Endothelial cell of umbilical vein (primary cell): ENCODE measurements at regions of chr5 and their contacts with region 1.

Region 1: DNA sequence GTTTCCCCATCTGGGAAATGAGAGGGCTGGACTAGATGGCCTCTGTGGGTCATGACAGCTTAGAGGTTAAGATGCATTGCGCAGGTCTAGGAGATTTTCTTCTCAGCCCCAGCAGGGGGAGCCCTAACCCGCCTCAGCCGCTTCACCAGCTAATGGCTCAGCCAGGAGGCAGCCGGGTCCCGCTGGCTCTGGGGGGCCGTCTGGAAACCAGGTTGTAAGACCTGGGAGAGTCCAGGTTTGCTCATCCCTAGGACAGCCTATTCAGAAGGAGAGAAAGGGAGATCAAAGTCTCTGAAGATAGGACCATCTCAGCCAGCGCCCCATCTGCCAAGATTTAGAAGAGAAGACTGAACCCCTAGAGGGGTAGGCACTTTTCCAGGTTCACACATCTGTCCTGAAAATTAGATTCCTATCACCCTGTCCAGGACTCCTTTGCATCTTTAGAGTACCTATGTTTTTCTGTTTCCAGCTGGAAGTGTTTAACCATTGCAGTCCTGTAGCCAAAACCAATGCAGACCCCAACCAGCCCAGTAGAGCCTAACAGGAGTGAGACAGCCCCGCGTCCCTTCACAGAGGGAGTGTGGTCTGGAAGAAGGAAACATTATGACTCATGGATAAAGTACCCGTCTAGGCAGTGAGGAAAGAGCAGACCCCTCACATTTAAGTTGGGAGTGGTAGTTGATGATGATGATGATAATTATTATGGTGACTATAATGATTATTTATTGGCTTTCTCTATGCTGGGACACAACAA is 27.5 kb downstream of the SPARC start:
- DNase-seq: peak; percentile 84
- H3K4me3 ChIP-seq: no peak overlapping the region
- H3K27ac ChIP-seq: no peak overlapping the region
- H3K4me1 ChIP-seq: peaks cover 16% of the 10 kb centered on the region
- H3K27me3 ChIP-seq: no peaks in the 10 kb centered on the region
- CTCF ChIP-seq: peak; percentile 85 to 92
- POLR2A ChIP-seq: peak; percentile 49

Region 2: GRCh38 chr5:151252762-151253604 is 406.2 kb before region 1 on chr5 and contains the start of gene GM2A:
- CTCF ChIA-PET with region 1: interaction called, 3 read pairs
- POLR2A ChIA-PET with region 1: interaction called, 4 read pairs
- dilution Hi-C with region 1: no loop called
- intact Hi-C with region 1: loop called (anchors 5 kb)
- DNase-seq: peak; percentile 100
- H3K4me3 ChIP-seq: peak within 1 kb of the TSS; percentile 48 to 75 (median 55)
- H3K27ac ChIP-seq: no peak within 1 kb of the TSS
- H3K4me1 ChIP-seq: peaks cover 5% of the 10 kb centered on the region
- H3K27me3 ChIP-seq: no peaks in the 10 kb centered on the region
- CTCF ChIP-seq: no peak
- POLR2A ChIP-seq: peak; percentile 46
- total RNA-seq, gene GM2A: 21.2 and 22.5 TPM in 2 replicates

Region 3: DNA sequence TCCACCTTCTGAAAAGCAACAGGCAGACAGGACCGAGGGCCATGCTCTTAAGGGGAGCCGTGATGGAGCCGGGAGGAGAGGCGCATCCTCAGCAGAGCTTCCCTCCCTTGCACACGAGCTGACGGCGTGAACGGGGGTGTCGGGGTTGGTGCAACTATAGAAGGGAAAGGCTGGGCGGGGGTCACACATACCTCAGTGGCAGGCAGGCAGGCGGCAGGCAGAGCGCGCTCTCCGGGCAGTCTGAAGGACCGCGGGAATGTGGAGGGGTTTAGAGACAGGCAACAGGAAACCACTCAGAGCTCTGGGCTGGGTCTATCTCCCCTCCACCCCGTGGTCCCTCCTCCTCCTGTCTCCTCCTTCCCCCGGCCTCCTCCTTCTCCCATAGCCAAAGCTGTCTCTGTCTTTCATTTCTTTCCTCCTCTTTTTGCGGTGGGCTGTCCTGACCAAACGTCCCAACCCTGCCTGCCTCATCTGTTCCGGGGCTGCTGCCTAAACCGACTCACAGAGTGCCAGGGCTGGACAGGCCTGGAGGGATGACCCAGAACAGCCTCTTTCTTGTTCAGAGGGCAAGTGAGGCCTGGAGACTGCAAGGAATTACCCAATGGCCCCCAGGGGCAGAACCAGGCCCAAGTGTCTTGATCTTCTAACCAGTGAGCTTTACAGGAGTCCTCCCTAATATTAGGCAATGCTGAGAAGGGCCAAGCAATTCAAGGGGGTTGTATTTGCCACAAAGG is 27.7 kb after region 1 on chr5 and contains the start of gene SPARC:
- CTCF ChIA-PET with region 1: interaction called, 39 read pairs
- POLR2A ChIA-PET with region 1: interaction called, 11 read pairs
- dilution Hi-C with region 1: no loop called
- intact Hi-C with region 1: loop called (anchors 1 kb)
- DNase-seq: peak; percentile 85
- H3K4me3 ChIP-seq: peak within 1 kb of the TSS; percentile 73 to 98 (median 89)
- H3K27ac ChIP-seq: peak within 1 kb of the TSS; percentile 84
- H3K4me1 ChIP-seq: peaks cover 38% of the 10 kb centered on the region
- H3K27me3 ChIP-seq: no peaks in the 10 kb centered on the region
- CTCF ChIP-seq: no peak
- POLR2A ChIP-seq: peak; percentile 100
- total RNA-seq, gene SPARC: 3,114 and 3,174 TPM in 2 replicates

Region 4: GRCh38 chr5:151708126-151708525 is 48.9 kb after region 1 on chr5:
- CTCF ChIA-PET with region 1: interaction called, 21 read pairs
- POLR2A ChIA-PET with region 1: no interaction called
- dilution Hi-C with region 1: no loop called
- intact Hi-C with region 1: no loop called
- DNase-seq: peak; percentile 39
- H3K4me3 ChIP-seq: no peak overlapping the region
- H3K27ac ChIP-seq: no peak overlapping the region
- H3K4me1 ChIP-seq: peaks cover 13% of the 10 kb centered on the region
- H3K27me3 ChIP-seq: no peaks in the 10 kb centered on the region
- CTCF ChIP-seq: no peak
- POLR2A ChIP-seq: no peak

Region 5: GRCh38 chr5:151935135-151935695 is 276.0 kb after region 1 on chr5:
- CTCF ChIA-PET with region 1: no interaction called
- POLR2A ChIA-PET with region 1: no interaction called
- dilution Hi-C with region 1: no loop called
- intact Hi-C with region 1: no loop called
- DNase-seq: no peak
- H3K4me3 ChIP-seq: no peak overlapping the region
- H3K27ac ChIP-seq: no peak overlapping the region
- H3K4me1 ChIP-seq: no peaks in the 10 kb centered on the region
- H3K27me3 ChIP-seq: no peaks in the 10 kb centered on the region
- CTCF ChIP-seq: no peak
- POLR2A ChIP-seq: no peak

Region 6: DNA sequence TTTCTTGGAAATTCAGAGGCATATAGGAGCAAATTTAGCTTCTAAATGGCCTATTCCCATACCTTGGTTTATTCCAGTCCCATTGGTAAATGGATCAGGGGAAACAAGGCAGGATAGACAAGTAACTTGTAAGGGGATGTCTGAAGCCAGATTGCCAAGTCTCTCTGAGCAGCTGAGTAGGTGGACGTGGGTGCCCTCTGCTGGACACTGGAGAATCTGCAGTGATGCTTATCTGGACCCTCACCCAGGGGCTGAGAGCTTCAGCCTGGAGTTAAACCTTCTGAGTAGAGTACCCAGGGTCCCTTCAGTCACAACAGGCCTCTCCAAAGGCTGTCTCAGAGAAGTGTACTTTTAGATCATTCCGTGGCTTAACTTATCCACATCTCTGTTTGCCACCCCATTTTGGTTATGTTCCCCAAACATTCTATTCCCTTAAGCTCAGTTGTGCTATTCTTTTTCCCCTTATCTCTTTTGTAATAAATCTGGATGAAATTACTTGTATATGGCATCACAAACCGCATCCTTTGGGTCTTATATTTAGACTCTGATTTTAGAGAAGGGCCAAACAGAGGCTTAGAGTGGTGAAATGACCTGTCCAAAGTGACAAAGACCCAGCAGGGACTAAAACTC is 483.8 kb after region 1 on chr5:
- CTCF ChIA-PET with region 1: interaction called, 3 read pairs
- POLR2A ChIA-PET with region 1: no interaction called
- dilution Hi-C with region 1: no loop called
- intact Hi-C with region 1: loop called (anchors 10 kb)
- DNase-seq: peak; percentile 47
- H3K4me3 ChIP-seq: no peak overlapping the region
- H3K27ac ChIP-seq: no peak overlapping the region
- H3K4me1 ChIP-seq: no peaks in the 10 kb centered on the region
- H3K27me3 ChIP-seq: no peaks in the 10 kb centered on the region
- CTCF ChIP-seq: peak; percentile 76 to 94
- POLR2A ChIP-seq: no peak

Region 7: GRCh38 chr5:152246407-152246806 is 587.2 kb after region 1 on chr5:
- CTCF ChIA-PET with region 1: no interaction called
- POLR2A ChIA-PET with region 1: no interaction called
- dilution Hi-C with region 1: no loop called
- intact Hi-C with region 1: no loop called
- DNase-seq: peak; percentile 1
- H3K4me3 ChIP-seq: no peak overlapping the region
- H3K27ac ChIP-seq: no peak overlapping the region
- H3K4me1 ChIP-seq: no peaks in the 10 kb centered on the region
- H3K27me3 ChIP-seq: no peaks in the 10 kb centered on the region
- CTCF ChIP-seq: no peak
- POLR2A ChIP-seq: no peak